Left cardiac atrium (tissue), 4 donors: ENCODE measurements at regions of chr3 and their contacts with region 1.

Region 1: GRCh38 chr3:11201246-11202024 is 47.1 kb downstream of the HRH1 start:
- DNase-seq: peak; percentile 63
- ATAC-seq: peak; percentile 56 to 60

Region 2: GRCh38 chr3:11060500-11061251 is 140.8 kb before region 1 on chr3:
- intact Hi-C with region 1: loop called (anchors 2 to 10 kb)
- DNase-seq: peak; percentile 78
- ATAC-seq: peak; percentile 79 to 83

Region 3: DNA sequence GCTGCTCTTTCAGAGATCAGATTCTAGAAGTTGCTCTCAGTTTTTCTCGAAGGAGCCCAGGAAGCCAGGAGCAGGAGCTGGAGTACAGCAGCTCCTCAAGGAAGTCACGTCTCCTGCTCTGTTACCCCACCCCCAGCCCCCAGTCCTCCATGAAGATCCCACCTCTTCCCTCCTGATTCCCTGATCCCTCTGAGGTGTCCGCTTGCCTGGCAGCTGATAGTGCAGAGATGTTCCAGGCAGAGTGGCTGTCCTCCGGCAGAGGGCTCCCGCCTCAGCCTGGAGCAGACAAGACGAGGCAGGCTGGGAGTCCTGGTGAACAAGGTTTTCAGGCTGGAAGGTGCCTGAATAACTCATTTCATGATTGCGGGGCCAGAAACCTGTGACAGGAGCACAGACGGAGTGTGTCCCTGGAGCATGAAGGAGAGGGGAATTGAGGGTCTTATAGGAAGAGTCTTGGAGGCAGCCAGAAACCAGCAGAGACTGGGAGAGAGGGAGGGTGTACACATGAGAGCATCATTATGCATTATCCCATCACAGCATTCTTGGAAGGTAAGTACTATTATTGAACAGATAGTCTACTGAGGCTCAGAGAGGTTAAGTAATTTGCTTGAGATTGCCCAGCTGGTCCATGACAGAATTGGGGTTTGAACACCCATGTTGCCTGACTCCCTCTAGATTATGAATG is 46.0 kb before region 1 on chr3:
- intact Hi-C with region 1: loop called in 1 of 2 experiments (anchors 5 kb)
- DNase-seq: peak; percentile 79
- ATAC-seq: peak; percentile 89